IMR-90 (cell line): ENCODE measurements at regions of chr5 and their contacts with region 1.

Region 1: GRCh38 chr5:64939522-64940510 is 171.1 kb downstream of the CWC27 start:
- DNase-seq: peak; percentile 59
- ATAC-seq: peak; percentile 87
- H3K4me3 ChIP-seq: no peak overlapping the region
- H3K27ac ChIP-seq: peak overlapping the region; percentile 17
- H3K4me1 ChIP-seq: peaks cover 10% of the 10 kb centered on the region
- H3K27me3 ChIP-seq: no peaks in the 10 kb centered on the region
- CTCF ChIP-seq: no peak
- POLR2A ChIP-seq: no peak
- RAD21 ChIP-seq: no peak

Region 2: DNA sequence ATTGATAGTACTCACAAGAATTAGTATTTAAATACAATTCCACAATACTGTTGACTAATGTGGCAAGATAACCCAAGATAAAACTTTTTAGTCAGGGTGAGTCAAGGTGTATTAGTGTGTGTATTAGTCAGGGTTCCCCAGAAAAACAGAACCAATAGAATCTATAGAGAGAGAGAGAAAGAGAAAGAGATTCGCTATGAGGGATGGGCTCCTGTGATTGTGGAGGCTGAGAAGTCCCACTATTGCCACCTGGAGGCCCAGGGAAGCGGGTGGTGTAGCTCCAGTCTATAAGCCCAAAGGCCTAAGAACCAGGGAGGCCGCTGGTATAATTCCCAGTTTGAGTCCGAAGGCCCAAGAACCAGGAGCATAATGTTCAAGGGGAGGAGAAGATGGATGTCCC is 259.5 kb before region 1 on chr5:
- CTCF ChIA-PET with region 1: no interaction called
- POLR2A ChIA-PET with region 1: no interaction called
- dilution Hi-C with region 1: no loop called
- in situ Hi-C with region 1: no loop called
- intact Hi-C with region 1: no loop called
- DNase-seq: no peak
- ATAC-seq: no peak
- H3K4me3 ChIP-seq: no peak overlapping the region
- H3K27ac ChIP-seq: no peak overlapping the region
- H3K4me1 ChIP-seq: no peaks in the 10 kb centered on the region
- H3K27me3 ChIP-seq: peaks cover 10% of the 10 kb centered on the region
- CTCF ChIP-seq: 0 out of 2 replicates have a peak, but pooled peaks have one; percentile 4
- POLR2A ChIP-seq: no peak
- RAD21 ChIP-seq: no peak

Region 3: DNA sequence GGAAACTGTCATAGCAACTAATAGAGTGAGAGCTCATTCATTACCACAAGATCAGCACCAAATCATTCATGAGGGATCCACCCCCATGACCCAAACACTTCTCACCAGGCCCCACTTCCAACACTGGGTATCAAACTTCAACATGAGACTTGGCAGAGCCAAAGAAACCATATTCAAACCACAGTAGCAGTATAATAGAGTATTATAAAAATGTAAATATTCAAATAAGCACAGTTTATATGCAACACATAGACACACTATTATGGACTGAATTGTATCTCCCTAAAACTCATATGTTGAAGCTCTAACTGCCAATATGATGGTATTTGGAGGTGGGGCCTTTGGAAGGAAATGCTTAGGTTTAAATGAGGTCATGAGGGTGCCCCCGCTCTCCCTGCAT is 69.4 kb after region 1 on chr5:
- CTCF ChIA-PET with region 1: no interaction called
- POLR2A ChIA-PET with region 1: interaction called, 18 read pairs
- dilution Hi-C with region 1: no loop called
- in situ Hi-C with region 1: no loop called
- intact Hi-C with region 1: no loop called
- DNase-seq: no peak
- ATAC-seq: no peak
- H3K4me3 ChIP-seq: no peak overlapping the region
- H3K27ac ChIP-seq: no peak overlapping the region
- H3K4me1 ChIP-seq: no peaks in the 10 kb centered on the region; the same call in 1 of the 2 replicates
- H3K27me3 ChIP-seq: no peaks in the 10 kb centered on the region
- CTCF ChIP-seq: no peak
- POLR2A ChIP-seq: no peak
- RAD21 ChIP-seq: no peak